CD4-positive, alpha-beta T cell (primary cell): ENCODE measurements at regions of chr12 and their contacts with region 1.

Region 1: DNA sequence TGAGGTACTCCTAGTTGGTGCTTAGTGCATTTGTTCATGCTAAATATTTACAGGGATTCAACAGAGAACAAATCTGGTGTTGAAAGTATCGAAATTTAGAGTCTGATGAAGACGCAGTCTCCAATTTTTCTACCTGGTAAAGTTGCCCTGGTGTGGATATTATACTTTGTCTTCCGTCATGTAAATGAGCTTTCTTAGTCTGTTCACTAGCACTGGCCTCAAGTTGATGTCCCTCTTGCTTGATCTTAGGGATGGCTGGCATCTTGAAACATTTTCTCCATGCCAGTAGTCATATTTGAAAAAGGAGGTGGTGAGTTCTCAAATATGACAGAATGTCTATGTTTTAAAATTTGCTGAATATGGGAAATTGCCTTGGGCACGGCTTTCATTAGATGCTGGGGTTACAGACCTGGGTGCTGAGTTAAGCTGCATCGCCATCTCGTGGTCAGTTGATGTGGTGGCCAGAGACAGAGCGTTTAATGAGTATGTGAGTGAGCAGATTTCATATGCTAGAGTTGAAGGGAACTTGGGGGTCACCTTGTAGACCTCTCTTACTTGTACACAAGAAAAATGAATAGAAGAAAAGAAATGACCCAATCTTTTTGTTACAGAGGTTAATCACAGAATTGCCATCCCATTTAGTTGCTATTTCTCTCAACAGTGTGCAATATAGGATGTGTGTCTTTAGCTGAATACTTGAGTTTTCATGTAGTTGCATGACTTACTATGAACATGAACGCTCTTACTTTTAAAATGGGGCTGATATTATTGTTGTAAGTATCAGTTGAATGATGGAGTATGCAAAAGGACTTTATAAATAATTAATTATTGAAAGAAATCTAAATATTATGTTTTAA is 172.8 kb upstream of the DCN start:
- DNase-seq: peak in 13 of 14 experiments; percentile 4 to 66 (median 25)
- ATAC-seq: peak; percentile 76
- H3K4me3 ChIP-seq: no peak overlapping the region
- H3K4me3 Mint-ChIP-seq: no peak overlapping the region
- H3K27ac ChIP-seq: no peak overlapping the region
- H3K27ac Mint-ChIP-seq: no peak overlapping the region
- H3K4me1 ChIP-seq: no peaks in the 10 kb centered on the region
- H3K4me1 Mint-ChIP-seq: no peaks in the 10 kb centered on the region
- H3K27me3 ChIP-seq: no peaks in the 10 kb centered on the region
- H3K27me3 Mint-ChIP-seq: peaks cover 27% of the 10 kb centered on the region
- CTCF ChIP-seq: peak; percentile 58

Region 2: DNA sequence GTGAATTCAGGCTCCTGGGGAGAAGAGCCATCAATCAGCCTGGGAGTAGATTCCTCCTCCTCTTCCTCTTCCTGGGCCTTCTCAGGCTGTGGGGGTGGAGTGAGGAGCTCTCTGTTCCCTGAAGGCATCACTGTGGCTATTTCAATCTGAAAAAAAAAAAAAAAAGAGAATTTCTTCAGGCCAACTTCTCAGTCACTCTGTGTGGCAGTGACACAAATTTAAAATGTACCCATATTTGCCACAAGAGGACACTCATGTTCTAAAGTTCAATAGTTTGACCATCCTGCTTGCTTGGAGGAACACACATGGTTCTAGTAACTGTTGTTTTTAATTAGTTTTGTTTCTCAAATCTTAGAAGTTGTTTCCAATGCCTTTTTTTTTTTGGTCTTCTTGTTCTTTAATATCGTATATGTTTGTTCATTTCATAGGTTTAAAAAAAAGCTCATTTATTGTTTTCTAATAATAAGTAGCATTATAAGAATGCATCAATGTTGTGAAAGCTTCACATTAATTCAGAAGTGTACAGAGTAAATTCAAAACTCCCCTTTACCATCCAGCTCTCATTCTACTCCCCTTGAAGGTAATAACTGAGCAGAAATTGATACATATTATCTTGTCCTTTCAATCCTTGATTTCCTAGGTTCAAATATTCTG is 377.1 kb before region 1 on chr12:
- CTCF ChIA-PET with region 1: no interaction called
- POLR2A ChIA-PET with region 1: no interaction called
- intact Hi-C with region 1: loop called in 1 of 2 experiments (anchors 10 kb)
- DNase-seq: peak in 3 of 14 experiments; percentile 8 to 14 (median 9)
- ATAC-seq: no peak
- H3K4me3 ChIP-seq: no peak overlapping the region
- H3K4me3 Mint-ChIP-seq: no peak overlapping the region
- H3K27ac ChIP-seq: no peak overlapping the region
- H3K27ac Mint-ChIP-seq: no peak overlapping the region
- H3K4me1 ChIP-seq: no peaks in the 10 kb centered on the region
- H3K4me1 Mint-ChIP-seq: no peaks in the 10 kb centered on the region
- H3K27me3 ChIP-seq: no peaks in the 10 kb centered on the region
- H3K27me3 Mint-ChIP-seq: peaks cover 7% of the 10 kb centered on the region
- CTCF ChIP-seq: no peak

Region 3: DNA sequence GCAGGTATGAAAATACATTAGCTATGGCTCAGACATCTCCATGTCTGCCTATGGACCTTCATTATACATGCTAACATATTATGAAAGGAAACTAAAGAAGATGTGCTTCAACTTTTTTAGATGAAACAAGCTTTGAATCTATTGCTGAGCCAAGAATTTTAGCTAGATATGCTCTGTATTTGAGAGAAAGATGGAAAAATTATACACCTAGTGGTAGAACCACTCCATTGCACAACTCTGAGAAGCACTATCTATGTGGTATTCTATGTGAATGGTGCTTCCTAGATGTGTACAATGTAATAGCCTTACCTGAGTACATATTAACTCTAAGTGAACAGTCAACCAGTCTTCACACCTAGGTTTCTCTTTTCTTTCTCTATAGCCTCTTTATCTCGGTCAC is 367.9 kb before region 1 on chr12:
- CTCF ChIA-PET with region 1: no interaction called
- POLR2A ChIA-PET with region 1: no interaction called
- intact Hi-C with region 1: loop called in 1 of 2 experiments (anchors 5 kb)
- DNase-seq: no peak
- ATAC-seq: no peak
- H3K4me3 ChIP-seq: no peak overlapping the region
- H3K4me3 Mint-ChIP-seq: no peak overlapping the region
- H3K27ac ChIP-seq: no peak overlapping the region
- H3K27ac Mint-ChIP-seq: no peak overlapping the region
- H3K4me1 ChIP-seq: no peaks in the 10 kb centered on the region
- H3K4me1 Mint-ChIP-seq: no peaks in the 10 kb centered on the region
- H3K27me3 ChIP-seq: no peaks in the 10 kb centered on the region
- H3K27me3 Mint-ChIP-seq: no peaks in the 10 kb centered on the region
- CTCF ChIP-seq: no peak